ENCODE measurements at regions of chr2 and their contacts with region 1.

Region 1: DNA sequence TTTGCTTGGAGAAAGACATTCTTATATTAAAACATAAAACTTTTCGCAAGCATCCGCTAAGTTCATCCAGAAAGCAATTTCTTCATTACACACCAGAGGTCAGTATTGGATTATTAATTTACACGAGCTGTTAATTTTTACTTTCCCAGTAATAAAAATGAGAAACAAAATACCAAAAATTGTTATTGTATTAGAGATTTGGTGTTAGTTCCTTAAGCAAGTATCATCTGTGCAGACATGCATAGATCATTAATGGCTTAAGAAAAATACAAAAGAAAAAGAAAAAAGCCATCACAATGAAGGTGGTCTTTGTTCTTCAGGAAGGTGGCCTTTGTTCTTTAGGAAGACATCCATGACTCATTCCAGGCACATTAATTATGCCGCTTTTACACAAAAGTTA is 53.6 kb upstream of the HNMT start:
- DNase-seq: no peak
- ATAC-seq: no peak

Region 2: GRCh38 chr2:137838255-137839092 is 72.2 kb before region 1 on chr2:
- intact Hi-C with region 1: no loop called
- DNase-seq: no peak
- ATAC-seq: no peak

Region 3: GRCh38 chr2:138787053-138787666 is 876.5 kb after region 1 on chr2:
- intact Hi-C with region 1: loop called (anchors 1 kb)
- DNase-seq: no peak
- ATAC-seq: no peak

Region 4: DNA sequence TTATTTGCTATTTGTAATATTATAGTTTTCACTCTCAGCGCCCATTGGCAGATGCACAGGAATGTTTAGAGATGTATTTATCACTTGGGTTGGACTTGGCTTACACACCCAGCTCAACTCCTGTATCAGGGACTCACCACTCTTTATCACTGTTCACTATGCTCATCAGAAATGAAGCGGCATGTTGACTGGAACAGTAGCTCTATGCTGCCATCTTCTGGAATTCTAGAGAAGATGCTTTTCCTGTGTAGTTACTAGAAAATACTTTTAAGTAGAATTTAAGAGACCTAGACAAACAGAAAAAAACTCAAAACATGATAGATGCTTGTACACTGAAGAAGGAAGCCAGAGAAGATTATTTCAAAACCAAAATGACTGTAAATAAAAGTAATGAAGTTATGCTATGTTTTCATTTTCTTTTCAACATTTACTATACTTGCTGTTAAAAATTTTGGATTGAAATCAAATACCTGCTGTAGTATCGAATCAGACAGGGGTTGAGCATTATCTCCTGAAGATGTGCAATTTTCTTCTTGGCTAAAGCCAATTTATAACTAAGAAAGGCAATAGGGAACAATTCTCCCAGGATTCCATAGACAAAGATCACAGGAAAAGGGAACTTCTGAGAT is 916.9 kb after region 1 on chr2:
- intact Hi-C with region 1: loop called (anchors 2 kb)
- DNase-seq: no peak
- ATAC-seq: peak; percentile 69

Measured in Right ventricle myocardium inferior (tissue), 1 donor.